Gastrocnemius medialis (tissue), 4 donors: ENCODE measurements at regions of chr1 and their contacts with region 1.

Region 1: DNA sequence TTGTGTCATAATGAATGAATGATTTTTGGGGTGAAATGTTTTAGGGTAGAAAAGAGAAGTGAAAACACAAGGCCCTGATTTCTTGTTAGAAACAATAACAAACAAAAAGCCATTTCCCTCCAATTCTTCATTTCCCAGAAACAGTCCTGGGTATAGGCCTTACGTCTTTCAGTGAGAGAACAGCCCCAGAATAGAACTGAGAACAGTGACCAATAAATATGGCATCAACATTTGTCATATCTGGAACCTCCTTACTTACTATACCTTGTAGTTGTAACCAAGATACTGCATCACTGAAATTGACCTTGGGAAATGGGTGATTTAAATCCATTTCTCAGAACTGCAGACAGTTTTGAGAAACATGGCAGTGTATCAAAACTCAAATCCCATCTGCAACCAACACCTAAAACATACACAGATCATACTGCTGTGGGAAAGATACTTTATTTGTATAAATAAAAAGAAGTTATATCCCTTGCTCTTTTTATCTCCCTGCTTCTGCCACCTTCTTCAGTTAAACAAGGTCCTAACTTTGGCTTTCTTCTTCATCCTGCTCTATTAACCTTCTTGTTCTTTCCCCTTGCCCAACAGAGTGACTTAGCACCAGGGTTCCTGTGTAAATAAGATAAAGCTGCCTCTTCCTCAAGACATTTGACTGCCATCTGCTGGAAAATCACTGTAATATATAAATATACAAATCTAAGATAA is 19.5 kb downstream of the XKR8 start:
- DNase-seq: no peak
- ATAC-seq: peak; percentile 93 to 96
- H3K4me3 ChIP-seq: no peak overlapping the region
- H3K27ac ChIP-seq: peak overlapping the region in 3 of 4 donors; percentile 38 to 66 (median 46)
- H3K4me1 ChIP-seq: peaks cover 3 to 10% of the 10 kb centered on the region in 2 donors
- H3K27me3 ChIP-seq: no peaks in the 10 kb centered on the region
- CTCF ChIP-seq: peak; percentile 48 to 63 (median 61)
- POLR2A ChIP-seq: no peak

Region 2: GRCh38 chr1:27922272-27922671 is 57.0 kb before region 1 on chr1:
- in situ Hi-C with region 1: no loop called
- intact Hi-C with region 1: no loop called
- DNase-seq: no peak
- ATAC-seq: no peak
- H3K4me3 ChIP-seq: no peak overlapping the region
- H3K27ac ChIP-seq: no peak overlapping the region
- H3K4me1 ChIP-seq: no peaks in the 10 kb centered on the region
- H3K27me3 ChIP-seq: no peaks in the 10 kb centered on the region
- CTCF ChIP-seq: no peak
- POLR2A ChIP-seq: no peak

Region 3: DNA sequence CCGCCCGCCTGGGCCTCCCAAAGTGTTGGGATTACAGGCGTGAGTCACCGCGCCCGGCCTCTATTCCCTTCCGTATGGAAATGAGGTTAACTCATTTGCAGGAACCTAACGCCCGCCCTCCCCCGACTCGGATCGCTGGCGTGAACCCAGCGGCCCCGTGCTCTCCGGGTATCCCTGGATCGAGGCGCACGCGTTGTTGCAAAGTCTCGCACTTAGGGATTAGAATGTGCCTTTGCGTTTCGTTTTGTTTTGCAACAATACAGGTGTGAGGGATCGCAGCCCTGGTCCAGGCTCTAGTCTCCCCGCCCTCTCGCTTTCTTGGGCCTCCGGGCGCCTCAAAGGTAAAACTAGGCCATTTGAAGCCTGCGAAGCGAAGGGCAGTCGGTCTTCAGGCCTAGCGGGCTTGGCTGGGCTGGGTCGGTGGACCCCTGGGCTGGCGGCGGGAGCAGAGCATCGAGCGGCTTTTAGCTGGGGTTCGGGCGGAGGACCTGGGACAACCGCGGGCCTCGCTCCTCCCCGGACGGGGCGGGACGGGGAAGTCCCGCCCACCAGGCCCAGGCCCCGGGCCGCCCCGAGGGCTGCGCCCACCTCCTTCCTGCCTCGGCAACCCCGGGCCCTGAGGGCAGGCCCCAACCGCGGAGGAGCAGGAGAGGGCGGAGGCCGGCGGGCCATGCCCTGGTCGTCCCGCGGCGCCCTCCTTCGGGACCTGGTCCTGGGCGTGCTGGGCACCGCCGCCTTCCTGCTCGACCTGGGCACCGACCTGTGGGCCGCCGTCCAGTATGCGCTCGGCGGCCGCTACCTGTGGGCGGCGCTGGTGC is 19.7 kb before region 1 on chr1 and contains the start of gene XKR8:
- in situ Hi-C with region 1: no loop called
- intact Hi-C with region 1: loop called (anchors 2 kb)
- DNase-seq: peak; percentile 41 to 52
- ATAC-seq: peak; percentile 73 to 86
- H3K4me3 ChIP-seq: peak within 1 kb of the TSS; percentile 61 to 86 (median 78)
- H3K27ac ChIP-seq: peak within 1 kb of the TSS; percentile 78 to 87 (median 82)
- H3K4me1 ChIP-seq: peaks cover 9 to 11% of the 10 kb centered on the region in 2 donors
- H3K27me3 ChIP-seq: no peaks in the 10 kb centered on the region
- CTCF ChIP-seq: peak in 4 of 5 experiments; percentile 21 to 47 (median 25)
- POLR2A ChIP-seq: peak; percentile 45 to 52
- total RNA-seq, gene XKR8: 3.8 to 7.4 (median 5.4) TPM

Region 4: GRCh38 chr1:28412731-28413130 is 433.4 kb after region 1 on chr1:
- in situ Hi-C with region 1: no loop called
- intact Hi-C with region 1: no loop called
- DNase-seq: no peak
- ATAC-seq: no peak
- H3K4me3 ChIP-seq: no peak overlapping the region
- H3K27ac ChIP-seq: no peak overlapping the region
- H3K4me1 ChIP-seq: peaks cover 8 to 16% of the 10 kb centered on the region in 2 donors
- H3K27me3 ChIP-seq: no peaks in the 10 kb centered on the region
- CTCF ChIP-seq: no peak
- POLR2A ChIP-seq: no peak